Activated CD8-positive, alpha-beta memory T cell treated with anti-CD3 and anti-CD28 coated beads, Interleukin-2, amount 10 ng/mL, durations not matched to agents 7 days and 5 days (primary cell): ENCODE measurements at regions of chr22 and their contacts with region 1.

Region 1: DNA sequence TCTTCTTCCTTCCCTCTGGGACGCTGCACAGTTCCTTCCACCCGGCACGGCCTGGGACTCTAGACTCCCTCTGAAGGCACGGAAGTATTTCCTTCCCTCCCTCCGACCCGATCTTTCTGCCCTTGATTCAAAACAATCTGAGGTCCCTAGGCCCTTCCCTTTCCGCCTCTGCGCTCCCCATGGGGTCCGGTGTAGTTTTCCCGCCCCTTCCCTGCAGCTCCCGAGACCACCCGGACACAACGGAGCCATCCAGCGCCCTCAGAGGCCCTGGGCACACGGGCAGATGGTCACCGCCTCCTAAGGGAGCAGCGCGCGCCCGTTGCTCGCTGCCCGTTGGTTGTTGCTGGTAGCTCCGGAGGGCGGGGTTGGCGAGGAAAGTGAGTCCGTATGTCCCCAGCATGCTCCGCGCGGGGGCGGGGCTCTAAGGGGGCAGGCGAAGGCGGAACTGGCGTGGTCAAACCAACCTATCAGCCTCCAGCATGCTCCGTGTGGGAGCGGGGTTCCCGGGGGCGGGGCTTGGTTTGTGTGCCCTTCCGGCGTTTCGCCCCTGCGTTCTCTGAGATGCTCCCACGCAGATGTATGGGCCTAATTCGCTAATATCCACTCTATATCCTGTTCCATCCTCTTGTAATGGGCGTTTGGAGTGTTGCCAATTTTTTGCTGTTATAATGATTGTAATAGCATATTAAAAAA is 19.6 kb downstream of the MIF start:
- DNase-seq: peak; percentile 100
- ATAC-seq: peak; percentile 100
- H3K4me3 Mint-ChIP-seq: peak overlapping the region; percentile 86
- H3K27ac Mint-ChIP-seq: peak overlapping the region; percentile 93
- H3K4me1 Mint-ChIP-seq: peaks cover 28% of the 10 kb centered on the region
- H3K27me3 Mint-ChIP-seq: no peaks in the 10 kb centered on the region

Region 2: GRCh38 chr22:23893943-23894709 is 19.7 kb before region 1 on chr22 and contains the start of gene MIF:
- CTCF ChIA-PET with region 1: interaction called, 37 read pairs
- DNase-seq: peak; percentile 98
- ATAC-seq: peak; percentile 88
- H3K4me3 Mint-ChIP-seq: peak within 1 kb of the TSS; percentile 89
- H3K27ac Mint-ChIP-seq: peak within 1 kb of the TSS; percentile 96
- H3K4me1 Mint-ChIP-seq: peaks cover 34% of the 10 kb centered on the region
- H3K27me3 Mint-ChIP-seq: no peaks in the 10 kb centered on the region
- total RNA-seq, gene MIF: 730 to 765 TPM